T-cell (primary cell): ENCODE measurements at regions of chr13 and their contacts with region 1.

Region 1: DNA sequence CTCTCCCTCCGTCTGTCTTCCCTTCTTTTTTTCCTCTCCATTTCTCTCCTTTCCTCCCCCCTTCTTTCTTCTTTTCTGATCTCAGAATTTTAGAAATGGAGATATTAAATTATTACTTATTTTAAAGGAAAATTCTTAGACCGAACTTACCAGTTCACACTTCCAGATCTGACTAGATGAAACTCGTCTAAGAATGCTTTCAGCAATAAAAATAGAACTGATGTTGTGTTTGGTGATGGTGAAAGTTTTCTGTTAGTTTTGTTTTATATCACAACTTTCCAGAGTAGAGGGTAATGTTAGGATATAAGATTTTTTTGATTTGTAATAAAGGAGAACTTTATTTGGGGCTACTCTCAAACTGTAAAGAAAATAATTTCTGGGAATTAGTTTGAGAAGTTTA is 29.9 kb downstream of the UCHL3 start:
- DNase-seq: no peak
- ATAC-seq: no peak
- H3K4me3 ChIP-seq: no peak overlapping the region
- H3K4me3 Mint-ChIP-seq: no peak overlapping the region
- H3K27ac ChIP-seq: no peak overlapping the region
- H3K27ac Mint-ChIP-seq: no peak overlapping the region
- H3K4me1 ChIP-seq: no peaks in the 10 kb centered on the region
- H3K4me1 Mint-ChIP-seq: peaks cover 8 to 24% (median 10%) of the 10 kb centered on the region in 3 donors
- H3K27me3 ChIP-seq: no peaks in the 10 kb centered on the region
- H3K27me3 Mint-ChIP-seq: no peaks in the 10 kb centered on the region

Region 2: DNA sequence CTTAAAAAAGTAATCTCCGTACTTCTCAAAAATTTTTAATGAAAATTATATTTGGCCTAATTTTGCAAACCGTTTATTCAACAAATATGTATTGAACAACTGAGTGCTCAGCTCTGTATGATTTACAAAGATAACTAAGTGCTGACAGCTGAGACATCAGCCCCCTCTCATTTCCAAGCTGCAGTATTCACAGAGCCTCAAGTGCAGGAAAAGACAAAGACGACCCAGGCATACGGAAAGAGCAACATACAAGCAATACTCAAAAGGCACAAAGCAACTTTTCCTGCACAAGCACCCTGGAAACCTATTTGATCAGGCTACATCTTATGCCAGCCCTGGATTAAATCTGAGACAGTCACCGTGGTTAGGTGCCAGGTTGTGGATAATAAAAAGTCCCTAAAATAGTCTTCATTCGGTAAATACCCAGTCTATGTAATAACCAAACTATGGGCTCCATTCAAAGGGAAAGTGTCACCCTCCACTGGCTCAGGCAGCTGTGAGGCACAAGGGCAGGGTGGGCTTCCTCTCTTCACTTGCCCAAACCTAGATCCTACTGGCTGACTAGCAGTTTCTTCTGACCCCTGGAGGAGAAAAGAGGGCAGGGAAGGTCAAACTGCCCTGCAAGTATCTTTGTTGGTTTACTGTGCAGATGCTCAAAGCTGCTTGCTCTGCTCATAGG is 163.1 kb before region 1 on chr13:
- CTCF ChIA-PET with region 1: no interaction called
- POLR2A ChIA-PET with region 1: no interaction called
- DNase-seq: no peak
- ATAC-seq: no peak
- H3K4me3 ChIP-seq: no peak overlapping the region
- H3K4me3 Mint-ChIP-seq: no peak overlapping the region
- H3K27ac ChIP-seq: no peak overlapping the region
- H3K27ac Mint-ChIP-seq: no peak overlapping the region
- H3K4me1 ChIP-seq: no peaks in the 10 kb centered on the region
- H3K4me1 Mint-ChIP-seq: no peaks in the 10 kb centered on the region
- H3K27me3 ChIP-seq: peaks cover 0 to 2% of the 10 kb centered on the region in 2 experiments
- H3K27me3 Mint-ChIP-seq: peaks cover 3 to 8% of the 10 kb centered on the region in 2 donors

Region 3: DNA sequence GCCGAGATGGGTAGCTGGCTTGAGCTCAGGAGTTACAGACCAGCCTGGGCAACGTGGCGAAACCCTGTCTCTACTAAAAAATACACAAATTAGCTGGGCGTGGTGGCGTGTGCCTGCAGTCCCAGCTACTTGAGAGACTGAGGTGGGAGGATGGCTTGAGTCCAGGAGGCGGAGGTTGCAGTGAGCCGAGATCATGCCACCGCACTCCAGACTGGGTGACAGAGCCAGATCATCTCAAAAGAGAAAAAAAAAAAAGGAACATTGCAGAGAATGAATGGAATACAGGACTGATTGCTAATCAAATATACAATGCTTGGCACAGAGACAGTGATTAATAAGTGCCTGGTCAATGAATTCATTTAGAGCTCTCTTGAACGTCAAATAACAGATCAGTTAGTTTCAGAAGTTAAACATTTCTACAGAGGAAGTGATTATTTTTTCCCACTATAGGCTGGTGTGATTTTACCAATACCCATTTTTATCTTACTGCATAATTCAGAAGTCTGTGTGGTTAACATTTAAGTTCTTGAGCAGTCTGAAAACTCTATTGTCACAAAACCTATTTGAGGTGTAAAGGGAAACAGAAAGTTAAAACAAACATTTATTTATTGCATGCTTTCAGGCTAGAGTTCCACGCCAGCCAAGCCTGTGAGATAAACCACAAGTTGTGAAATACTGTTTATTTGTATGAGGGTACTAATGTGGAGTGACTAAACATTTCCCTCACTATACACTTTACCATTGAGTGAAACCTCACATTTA is 89.8 kb before region 1 on chr13:
- CTCF ChIA-PET with region 1: no interaction called
- POLR2A ChIA-PET with region 1: no interaction called
- DNase-seq: peak in 1 of 35 experiments; percentile 4
- ATAC-seq: peak in 2 of 4 experiments; percentile 19 to 44
- H3K4me3 ChIP-seq: no peak overlapping the region
- H3K4me3 Mint-ChIP-seq: no peak overlapping the region
- H3K27ac ChIP-seq: no peak overlapping the region
- H3K27ac Mint-ChIP-seq: peak overlapping the region in 1 of 2 donors; percentile 13
- H3K4me1 ChIP-seq: no peaks in the 10 kb centered on the region
- H3K4me1 Mint-ChIP-seq: peaks cover 0 to 15% (median 0%) of the 10 kb centered on the region in 3 donors
- H3K27me3 ChIP-seq: peaks cover 0 to 14% of the 10 kb centered on the region in 2 experiments
- H3K27me3 Mint-ChIP-seq: peaks cover 39 to 41% of the 10 kb centered on the region in 2 donors

Region 4: DNA sequence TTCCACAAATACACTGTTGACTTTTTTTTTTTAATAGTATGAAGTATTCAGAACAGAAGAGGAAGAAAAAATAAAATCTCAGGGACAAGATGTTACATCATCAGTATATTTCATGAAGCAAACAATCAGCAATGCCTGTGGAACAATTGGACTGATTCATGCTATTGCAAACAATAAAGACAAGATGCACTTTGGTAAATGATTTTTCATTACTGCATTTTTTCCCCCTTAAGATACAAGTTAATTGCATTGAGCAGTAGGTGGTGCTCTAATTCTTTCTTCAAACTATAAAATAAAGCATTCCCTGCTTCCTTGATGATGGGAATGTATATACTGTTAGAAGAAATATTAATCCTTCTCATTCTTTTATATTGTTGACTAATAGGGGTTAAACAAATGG is 12.9 kb before region 1 on chr13:
- CTCF ChIA-PET with region 1: interaction called in 1 of 2 experiments, 10 read pairs
- POLR2A ChIA-PET with region 1: interaction called in 1 of 2 experiments, 3 read pairs
- DNase-seq: no peak
- ATAC-seq: no peak
- H3K4me3 ChIP-seq: no peak overlapping the region
- H3K4me3 Mint-ChIP-seq: no peak overlapping the region
- H3K27ac ChIP-seq: no peak overlapping the region
- H3K27ac Mint-ChIP-seq: no peak overlapping the region
- H3K4me1 ChIP-seq: no peaks in the 10 kb centered on the region
- H3K4me1 Mint-ChIP-seq: peaks cover 0 to 2% (median 0%) of the 10 kb centered on the region in 3 donors
- H3K27me3 ChIP-seq: no peaks in the 10 kb centered on the region
- H3K27me3 Mint-ChIP-seq: no peaks in the 10 kb centered on the region

Region 5: GRCh38 chr13:75836441-75836840 is 256.9 kb after region 1 on chr13:
- CTCF ChIA-PET with region 1: no interaction called
- POLR2A ChIA-PET with region 1: no interaction called
- DNase-seq: no peak
- ATAC-seq: no peak
- H3K4me3 ChIP-seq: no peak overlapping the region
- H3K4me3 Mint-ChIP-seq: no peak overlapping the region
- H3K27ac ChIP-seq: no peak overlapping the region
- H3K27ac Mint-ChIP-seq: no peak overlapping the region
- H3K4me1 ChIP-seq: peaks cover 0 to 11% of the 10 kb centered on the region in 2 experiments
- H3K4me1 Mint-ChIP-seq: peaks cover 3 to 19% (median 4%) of the 10 kb centered on the region in 3 donors
- H3K27me3 ChIP-seq: no peaks in the 10 kb centered on the region
- H3K27me3 Mint-ChIP-seq: no peaks in the 10 kb centered on the region